Panc1 (cell line): ENCODE measurements at regions of chr20 and their contacts with region 1.

Region 1: DNA sequence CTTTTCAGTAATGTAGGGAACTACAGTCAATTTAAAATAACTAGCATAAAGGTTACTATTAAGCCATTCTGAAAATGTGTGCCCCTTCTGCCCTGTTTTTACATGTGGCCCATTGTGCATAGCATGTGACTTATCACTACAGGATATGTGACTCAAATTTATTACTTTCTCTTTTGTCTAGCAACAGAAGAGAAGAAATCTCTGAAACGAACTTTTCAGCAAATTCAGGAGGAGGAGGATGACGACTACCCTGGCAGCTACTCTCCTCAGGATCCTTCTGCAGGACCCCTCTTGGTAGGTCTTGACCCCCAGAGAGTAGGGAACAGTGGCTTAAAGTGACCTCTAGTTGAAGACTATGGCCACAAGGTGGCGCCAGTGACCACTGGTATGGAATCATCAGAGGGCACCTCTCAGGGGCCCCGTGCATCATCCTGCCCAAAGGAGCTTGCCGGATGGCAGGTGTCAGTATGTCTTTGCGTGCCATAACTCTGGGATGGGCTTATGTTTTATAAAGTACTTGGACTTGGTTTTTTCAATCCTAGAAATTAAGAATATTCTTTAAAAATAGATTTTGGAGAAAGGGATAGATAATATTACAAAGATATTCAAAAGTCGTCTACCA is 23.9 kb downstream of the RPRD1B start:
- DNase-seq: peak; percentile 73
- ATAC-seq: peak; percentile 96
- H3K4me3 ChIP-seq: no peak overlapping the region
- H3K27ac ChIP-seq: peak overlapping the region; percentile 49; the same call in 1 of the 2 replicates
- H3K4me1 ChIP-seq: peaks cover 11% of the 10 kb centered on the region; the same call in 1 of the 2 replicates
- H3K27me3 ChIP-seq: no peaks in the 10 kb centered on the region
- CTCF ChIP-seq: peak; percentile 92

Region 2: DNA sequence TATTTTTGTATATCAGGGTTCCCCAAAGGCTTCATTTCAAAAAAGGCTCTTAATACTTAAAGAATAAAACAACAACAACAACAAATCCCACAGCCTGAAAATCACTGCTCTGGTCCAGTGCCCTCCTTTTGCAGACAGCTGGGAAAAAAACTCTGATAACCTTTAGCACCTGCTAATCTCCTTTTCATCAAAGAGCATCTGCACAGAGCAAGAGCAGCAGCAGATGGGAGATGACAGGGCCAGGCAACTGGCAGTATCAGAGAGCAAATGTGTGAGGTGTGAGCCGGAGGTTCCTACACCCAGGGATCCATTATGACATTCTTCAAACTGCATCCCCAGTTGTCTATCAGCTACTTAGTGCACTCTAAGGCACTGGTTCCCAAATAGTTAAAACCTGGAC is 49.9 kb before region 1 on chr20:
- CTCF ChIA-PET with region 1: no interaction called
- POLR2A ChIA-PET with region 1: no interaction called
- in situ Hi-C with region 1: no loop called
- intact Hi-C with region 1: no loop called
- DNase-seq: no peak
- ATAC-seq: no peak
- H3K4me3 ChIP-seq: no peak overlapping the region
- H3K27ac ChIP-seq: no peak overlapping the region
- H3K4me1 ChIP-seq: no peaks in the 10 kb centered on the region
- H3K27me3 ChIP-seq: no peaks in the 10 kb centered on the region
- CTCF ChIP-seq: no peak

Region 3: GRCh38 chr20:38165089-38165989 is 107.9 kb after region 1 on chr20 and contains the start of gene TGM2:
- CTCF ChIA-PET with region 1: interaction called, 3 read pairs
- POLR2A ChIA-PET with region 1: no interaction called
- in situ Hi-C with region 1: no loop called
- intact Hi-C with region 1: loop called (anchors 1 kb)
- DNase-seq: peak; percentile 52
- ATAC-seq: peak; percentile 94
- H3K4me3 ChIP-seq: peak within 1 kb of the TSS; percentile 48 to 78
- H3K27ac ChIP-seq: peak within 1 kb of the TSS; percentile 48; the same call in 1 of the 2 replicates
- H3K4me1 ChIP-seq: peaks cover 14% of the 10 kb centered on the region
- H3K27me3 ChIP-seq: no peaks in the 10 kb centered on the region
- CTCF ChIP-seq: peak; percentile 96
- total RNA-seq, gene TGM2: 113 TPM

Region 4: GRCh38 chr20:38221119-38221589 is 163.7 kb after region 1 on chr20:
- CTCF ChIA-PET with region 1: interaction called, 13 read pairs
- POLR2A ChIA-PET with region 1: no interaction called
- in situ Hi-C with region 1: no loop called
- intact Hi-C with region 1: loop called (anchors 1 kb)
- DNase-seq: no peak
- ATAC-seq: peak; percentile 79
- H3K4me3 ChIP-seq: peak overlapping the region in 1 of 2 experiments; percentile 23; a peak in 2 of 4 replicates
- H3K27ac ChIP-seq: no peak overlapping the region
- H3K4me1 ChIP-seq: peaks cover 12% of the 10 kb centered on the region
- H3K27me3 ChIP-seq: no peaks in the 10 kb centered on the region
- CTCF ChIP-seq: peak; percentile 96

Region 5: DNA sequence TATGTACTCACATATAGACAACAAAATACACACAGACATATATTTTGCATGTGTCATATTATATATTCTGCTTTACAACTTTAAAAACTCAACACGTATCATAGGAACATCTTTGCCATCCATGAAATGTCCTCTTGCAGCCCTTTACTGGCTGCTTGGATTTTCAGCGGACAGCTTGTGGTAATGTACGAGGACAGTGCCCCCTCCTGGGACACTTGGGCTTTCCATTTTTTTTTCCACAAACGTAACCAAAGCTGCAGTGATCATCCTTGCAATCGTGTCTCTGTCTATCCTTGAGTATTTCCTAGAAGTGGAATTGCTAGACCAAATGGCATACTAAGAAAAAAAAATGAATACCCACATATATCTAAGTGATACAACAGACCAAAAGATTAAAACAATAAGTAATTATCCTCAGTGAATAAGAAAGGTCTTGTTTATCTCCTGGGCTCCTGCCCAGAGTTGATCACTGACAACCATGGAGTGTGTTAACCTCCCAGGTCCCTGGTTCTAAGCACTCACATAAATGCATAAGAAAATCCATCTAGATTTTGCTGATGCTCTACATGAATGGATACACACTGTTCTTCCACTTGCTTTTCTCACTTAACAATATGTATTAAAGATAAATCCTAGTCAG is 264.6 kb after region 1 on chr20:
- CTCF ChIA-PET with region 1: no interaction called
- POLR2A ChIA-PET with region 1: interaction called, 9 read pairs
- in situ Hi-C with region 1: no loop called
- intact Hi-C with region 1: loop called (anchors 10 kb)
- DNase-seq: no peak
- ATAC-seq: peak; percentile 84
- H3K4me3 ChIP-seq: no peak overlapping the region
- H3K27ac ChIP-seq: no peak overlapping the region
- H3K4me1 ChIP-seq: no peaks in the 10 kb centered on the region
- H3K27me3 ChIP-seq: peaks cover 3% of the 10 kb centered on the region
- CTCF ChIP-seq: peak; percentile 87